A549 (cell line): ENCODE measurements at regions of chr17 and their contacts with region 1.

Region 1: GRCh38 chr17:63406689-63407330 is 39.3 kb downstream of the CYB561 start:
- DNase-seq: peak; percentile 87 to 92
- ATAC-seq: peak; percentile 95 to 97
- H3K4me3 ChIP-seq: no peak overlapping the region
- H3K27ac ChIP-seq: no peak overlapping the region
- H3K4me1 ChIP-seq: no peaks in the 10 kb centered on the region
- CTCF ChIP-seq: peak; percentile 96
- EP300 ChIP-seq: no peak
- POLR2A ChIP-seq: no peak
- RAD21 ChIP-seq: peak; percentile 94 to 96

Region 2: DNA sequence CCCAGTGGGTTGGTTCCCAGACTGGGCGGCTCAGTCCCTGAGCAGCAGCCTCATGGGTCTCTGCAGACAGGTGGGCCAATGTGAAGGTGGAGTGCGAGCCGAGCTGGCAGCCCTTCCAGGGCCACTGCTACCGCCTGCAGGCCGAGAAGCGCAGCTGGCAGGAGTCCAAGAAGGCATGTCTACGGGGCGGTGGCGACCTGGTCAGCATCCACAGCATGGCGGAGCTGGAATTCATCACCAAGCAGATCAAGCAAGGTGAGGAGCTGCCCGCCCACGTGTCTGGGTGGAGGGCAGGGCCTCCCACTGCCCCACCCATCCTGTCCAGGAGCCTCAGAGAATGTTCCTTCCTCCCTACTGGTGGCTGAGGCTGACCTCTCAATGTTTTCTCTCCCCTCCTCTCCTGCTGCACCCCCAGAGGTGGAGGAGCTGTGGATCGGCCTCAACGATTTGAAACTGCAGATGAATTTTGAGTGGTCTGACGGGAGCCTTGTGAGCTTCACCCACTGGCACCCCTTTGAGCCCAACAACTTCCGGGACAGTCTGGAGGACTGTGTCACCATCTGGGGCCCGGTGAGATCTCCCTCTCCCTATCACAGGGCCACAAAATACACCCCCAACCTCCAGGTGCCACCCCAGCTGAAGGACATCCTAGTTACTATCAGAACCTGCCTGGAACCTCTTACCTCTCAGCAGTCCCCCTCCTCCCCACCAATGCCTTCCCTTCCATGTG is 735.1 kb before region 1 on chr17:
- CTCF ChIA-PET with region 1: interaction called, 71 read pairs
- POLR2A ChIA-PET with region 1: interaction called, 3 read pairs
- DNase-seq: no peak
- ATAC-seq: peak; percentile 20 to 35; a peak in 4 of 6 replicates
- H3K4me3 ChIP-seq: no peak overlapping the region
- H3K27ac ChIP-seq: no peak overlapping the region
- H3K4me1 ChIP-seq: peaks cover 6% of the 10 kb centered on the region; the same call in 1 of the 3 replicates
- CTCF ChIP-seq: no peak
- EP300 ChIP-seq: no peak
- POLR2A ChIP-seq: no peak
- RAD21 ChIP-seq: no peak

Region 3: GRCh38 chr17:62995377-62995885 is 411.4 kb before region 1 on chr17:
- CTCF ChIA-PET with region 1: interaction called, 10 read pairs
- POLR2A ChIA-PET with region 1: no interaction called
- DNase-seq: peak; percentile 40 to 58
- ATAC-seq: peak; percentile 90 to 91
- H3K4me3 ChIP-seq: no peak overlapping the region
- H3K27ac ChIP-seq: no peak overlapping the region
- H3K4me1 ChIP-seq: peaks cover 30% of the 10 kb centered on the region
- CTCF ChIP-seq: peak; percentile 67
- EP300 ChIP-seq: no peak
- POLR2A ChIP-seq: no peak
- RAD21 ChIP-seq: peak; percentile 70 to 83

Region 4: DNA sequence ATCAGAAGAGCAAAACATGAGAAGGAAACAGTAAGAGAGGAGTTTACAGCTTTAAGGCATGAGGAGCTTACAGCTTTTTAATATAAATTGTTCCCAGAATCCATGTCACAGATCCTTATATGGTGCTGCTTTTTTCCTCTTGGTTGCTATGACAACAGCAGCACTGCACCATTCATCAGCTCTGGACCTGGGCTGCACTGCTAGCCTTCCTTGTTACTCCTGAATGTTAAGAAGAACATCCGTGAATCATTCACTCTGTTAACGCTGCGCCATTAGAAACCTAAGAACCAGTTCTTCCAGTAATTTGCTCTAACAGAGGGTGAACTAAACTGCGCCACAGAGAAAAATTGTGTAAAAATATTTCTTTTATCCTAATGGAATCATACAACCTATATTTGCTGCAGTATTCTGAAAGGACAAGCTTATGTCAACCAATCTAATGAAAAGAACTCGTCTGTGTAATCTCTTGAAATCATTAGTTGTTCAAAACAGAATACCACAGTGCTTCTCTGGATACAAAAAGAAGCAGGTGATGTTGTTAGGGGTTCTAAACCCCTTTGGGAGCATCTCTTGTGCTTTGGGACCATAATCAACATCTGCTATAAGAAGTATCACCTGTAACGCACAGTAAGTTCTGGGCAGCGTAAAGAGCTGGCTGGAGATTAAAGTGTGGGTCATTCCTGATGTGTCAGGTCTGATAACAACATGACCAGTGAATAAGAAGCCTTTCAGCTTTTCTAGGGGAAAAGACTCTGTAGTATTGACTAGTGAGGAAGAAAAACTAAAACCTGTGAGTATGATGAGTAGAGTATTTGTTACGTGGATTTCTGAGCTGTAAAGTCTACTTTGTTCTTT is 289.6 kb before region 1 on chr17:
- CTCF ChIA-PET with region 1: interaction called, 10 read pairs
- POLR2A ChIA-PET with region 1: no interaction called
- DNase-seq: peak in 1 of 2 experiments; percentile 17
- ATAC-seq: peak in 1 of 2 experiments; percentile 61; a peak in 3 of 6 replicates
- H3K4me3 ChIP-seq: no peak overlapping the region
- H3K27ac ChIP-seq: no peak overlapping the region
- H3K4me1 ChIP-seq: no peaks in the 10 kb centered on the region
- CTCF ChIP-seq: no peak
- EP300 ChIP-seq: no peak
- POLR2A ChIP-seq: no peak
- RAD21 ChIP-seq: no peak

Region 5: GRCh38 chr17:63279498-63280230 is 127.1 kb before region 1 on chr17:
- CTCF ChIA-PET with region 1: no interaction called
- POLR2A ChIA-PET with region 1: no interaction called
- DNase-seq: no peak
- ATAC-seq: no peak
- H3K4me3 ChIP-seq: no peak overlapping the region
- H3K27ac ChIP-seq: no peak overlapping the region
- H3K4me1 ChIP-seq: peaks cover 30% of the 10 kb centered on the region
- CTCF ChIP-seq: no peak
- EP300 ChIP-seq: no peak
- POLR2A ChIP-seq: no peak
- RAD21 ChIP-seq: no peak

Region 6: GRCh38 chr17:63332286-63332685 is 74.5 kb before region 1 on chr17:
- CTCF ChIA-PET with region 1: no interaction called
- POLR2A ChIA-PET with region 1: no interaction called
- DNase-seq: no peak
- ATAC-seq: peak in 1 of 2 experiments; percentile 34; a peak in 1 of 6 replicates
- H3K4me3 ChIP-seq: no peak overlapping the region
- H3K27ac ChIP-seq: no peak overlapping the region
- H3K4me1 ChIP-seq: peaks cover 4% of the 10 kb centered on the region; the same call in 1 of the 3 replicates
- CTCF ChIP-seq: no peak
- EP300 ChIP-seq: no peak
- POLR2A ChIP-seq: no peak
- RAD21 ChIP-seq: no peak; a peak in 2 of 5 replicates

Region 7: GRCh38 chr17:63381101-63381729 is 25.6 kb before region 1 on chr17:
- CTCF ChIA-PET with region 1: interaction called, 12 read pairs
- POLR2A ChIA-PET with region 1: no interaction called
- DNase-seq: no peak
- ATAC-seq: no peak
- H3K4me3 ChIP-seq: no peak overlapping the region
- H3K27ac ChIP-seq: no peak overlapping the region
- H3K4me1 ChIP-seq: no peaks in the 10 kb centered on the region; the same call in 2 of the 3 replicates
- CTCF ChIP-seq: no peak
- EP300 ChIP-seq: no peak
- POLR2A ChIP-seq: no peak
- RAD21 ChIP-seq: no peak

Region 8: DNA sequence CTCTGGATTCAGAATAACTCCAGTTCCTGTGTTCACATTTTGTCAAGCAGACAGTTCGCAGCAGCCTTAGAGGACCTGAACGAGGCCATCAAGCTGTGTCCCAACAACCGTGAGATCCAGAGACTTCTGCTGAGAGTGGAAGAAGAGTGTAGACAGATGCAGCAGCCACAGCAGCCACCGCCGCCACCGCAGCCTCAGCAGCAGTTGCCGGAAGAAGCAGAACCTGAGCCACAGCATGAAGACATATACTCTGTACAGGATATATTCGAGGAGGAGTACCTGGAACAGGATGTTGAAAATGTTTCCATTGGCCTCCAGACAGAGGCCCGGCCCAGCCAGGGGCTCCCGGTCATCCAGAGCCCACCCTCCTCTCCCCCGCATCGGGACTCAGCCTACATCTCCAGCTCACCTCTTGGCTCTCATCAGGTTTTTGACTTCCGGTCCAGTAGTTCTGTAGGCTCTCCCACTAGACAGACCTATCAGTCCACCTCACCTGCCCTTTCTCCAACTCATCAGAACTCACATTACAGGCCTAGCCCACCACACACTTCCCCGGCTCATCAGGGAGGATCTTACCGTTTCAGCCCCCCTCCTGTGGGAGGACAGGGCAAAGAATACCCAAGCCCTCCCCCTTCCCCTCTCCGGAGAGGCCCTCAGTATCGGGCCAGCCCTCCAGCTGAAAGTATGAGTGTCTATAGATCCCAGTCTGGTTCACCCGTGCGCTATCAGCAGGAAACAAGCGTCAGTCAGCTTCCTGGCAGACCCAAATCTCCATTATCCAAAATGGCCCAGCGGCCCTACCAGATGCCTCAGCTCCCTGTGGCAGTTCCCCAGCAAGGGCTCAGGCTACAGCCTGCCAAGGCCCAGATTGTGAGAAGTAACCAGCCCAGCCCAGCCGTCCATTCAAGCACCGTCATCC is 13.4 kb after region 1 on chr17:
- CTCF ChIA-PET with region 1: interaction called, 90 read pairs
- POLR2A ChIA-PET with region 1: interaction called, 3 read pairs
- DNase-seq: no peak
- ATAC-seq: no peak
- H3K4me3 ChIP-seq: no peak overlapping the region
- H3K27ac ChIP-seq: no peak overlapping the region
- H3K4me1 ChIP-seq: no peaks in the 10 kb centered on the region
- CTCF ChIP-seq: no peak
- EP300 ChIP-seq: no peak
- POLR2A ChIP-seq: no peak
- RAD21 ChIP-seq: no peak